ENCODE measurements at regions of chr7 and their contacts with region 1.

Region 1: DNA sequence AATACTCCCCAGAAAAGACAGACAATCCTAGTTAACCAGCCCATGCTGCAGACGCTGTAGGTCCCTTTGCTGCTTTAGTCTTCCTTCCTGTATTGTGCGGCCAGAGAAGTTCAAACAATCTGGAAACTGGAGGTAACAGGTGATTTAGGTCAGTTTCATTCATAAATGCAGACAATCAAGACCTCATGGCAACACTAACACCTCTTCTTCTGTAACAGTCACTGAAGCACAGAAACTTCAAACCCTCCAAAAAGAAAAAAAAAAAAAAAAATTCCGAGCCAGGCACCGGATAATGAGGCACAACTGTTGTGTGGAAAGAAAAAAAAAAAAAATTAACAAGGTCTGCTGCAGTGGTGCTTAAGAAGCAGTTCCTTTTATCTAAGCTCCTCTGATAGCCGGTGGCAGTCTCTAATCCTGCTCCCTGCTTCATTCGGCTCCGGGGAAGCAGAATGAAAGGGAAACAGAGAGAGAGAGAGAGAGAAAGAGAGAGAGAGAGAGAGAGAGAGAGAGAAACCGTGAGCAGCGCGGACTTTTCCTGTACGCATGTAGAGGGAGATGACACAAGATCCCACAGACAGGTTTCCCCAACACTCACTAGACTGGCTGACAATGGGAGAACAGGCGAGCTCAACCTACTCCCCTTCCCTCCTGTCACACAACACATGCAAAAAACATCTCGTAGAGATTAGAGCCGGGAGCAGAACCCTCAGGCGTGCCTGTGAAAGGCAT is at the start of gene SEMA3A:
- DNase-seq: peak; percentile 29
- ATAC-seq: peak; percentile 91 to 93
- total RNA-seq, gene SEMA3A: 6.8 to 8.8 TPM

Region 2: GRCh38 chr7:84022686-84023308 is 171.9 kb before region 1 on chr7:
- intact Hi-C with region 1: loop called in 1 of 2 experiments (anchors 5 kb)
- DNase-seq: peak; percentile 15
- ATAC-seq: peak in 1 of 2 donors; percentile 33

Region 3: GRCh38 chr7:84314263-84314662 is 119.6 kb after region 1 on chr7:
- intact Hi-C with region 1: loop called in 1 of 2 experiments (anchors 2 kb)
- DNase-seq: no peak
- ATAC-seq: peak in 1 of 2 donors; percentile 32

Region 4: DNA sequence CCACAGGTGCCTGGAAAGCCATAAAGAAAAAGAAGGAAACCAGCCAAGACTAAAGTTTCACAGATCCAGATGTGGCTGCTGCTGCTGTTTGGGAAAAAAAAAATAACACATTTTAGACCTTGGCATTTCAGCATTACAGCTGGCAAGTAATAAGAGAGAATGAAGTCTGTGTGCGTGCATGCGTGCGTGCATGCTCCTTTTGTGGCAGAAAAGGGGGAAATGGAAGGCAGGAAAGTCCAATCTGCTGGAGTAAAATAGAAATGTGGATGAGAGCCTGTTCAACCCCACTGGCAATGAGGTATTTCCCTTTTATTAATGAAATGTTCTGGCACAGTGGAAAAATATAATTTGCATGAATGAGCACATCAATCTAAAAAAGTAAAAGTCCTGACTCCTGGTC is 136.9 kb after region 1 on chr7:
- intact Hi-C with region 1: no loop called
- DNase-seq: no peak
- ATAC-seq: no peak